ENCODE measurements at regions of chr6 and their contacts with region 1.

Region 1: GRCh38 chr6:137866914-137867684 is at the start of gene TNFAIP3:
- DNase-seq: peak; percentile 97
- H3K4me3 Mint-ChIP-seq: peak within 1 kb of the TSS; percentile 91
- H3K27ac Mint-ChIP-seq: peak within 1 kb of the TSS; percentile 93
- H3K4me1 Mint-ChIP-seq: peaks cover 32% of the 10 kb centered on the region
- H3K27me3 Mint-ChIP-seq: no peaks in the 10 kb centered on the region
- total RNA-seq, gene TNFAIP3: 259 to 267 TPM

Region 2: GRCh38 chr6:137680705-137681346 is 186.3 kb before region 1 on chr6:
- CTCF ChIA-PET with region 1: interaction called, 3 read pairs
- POLR2A ChIA-PET with region 1: interaction called, 11 read pairs
- intact Hi-C with region 1: loop called (anchors 1 kb)
- DNase-seq: no peak
- H3K4me3 Mint-ChIP-seq: peak overlapping the region; percentile 18
- H3K27ac Mint-ChIP-seq: peak overlapping the region; percentile 75
- H3K4me1 Mint-ChIP-seq: peaks cover 64% of the 10 kb centered on the region
- H3K27me3 Mint-ChIP-seq: no peaks in the 10 kb centered on the region

Region 3: DNA sequence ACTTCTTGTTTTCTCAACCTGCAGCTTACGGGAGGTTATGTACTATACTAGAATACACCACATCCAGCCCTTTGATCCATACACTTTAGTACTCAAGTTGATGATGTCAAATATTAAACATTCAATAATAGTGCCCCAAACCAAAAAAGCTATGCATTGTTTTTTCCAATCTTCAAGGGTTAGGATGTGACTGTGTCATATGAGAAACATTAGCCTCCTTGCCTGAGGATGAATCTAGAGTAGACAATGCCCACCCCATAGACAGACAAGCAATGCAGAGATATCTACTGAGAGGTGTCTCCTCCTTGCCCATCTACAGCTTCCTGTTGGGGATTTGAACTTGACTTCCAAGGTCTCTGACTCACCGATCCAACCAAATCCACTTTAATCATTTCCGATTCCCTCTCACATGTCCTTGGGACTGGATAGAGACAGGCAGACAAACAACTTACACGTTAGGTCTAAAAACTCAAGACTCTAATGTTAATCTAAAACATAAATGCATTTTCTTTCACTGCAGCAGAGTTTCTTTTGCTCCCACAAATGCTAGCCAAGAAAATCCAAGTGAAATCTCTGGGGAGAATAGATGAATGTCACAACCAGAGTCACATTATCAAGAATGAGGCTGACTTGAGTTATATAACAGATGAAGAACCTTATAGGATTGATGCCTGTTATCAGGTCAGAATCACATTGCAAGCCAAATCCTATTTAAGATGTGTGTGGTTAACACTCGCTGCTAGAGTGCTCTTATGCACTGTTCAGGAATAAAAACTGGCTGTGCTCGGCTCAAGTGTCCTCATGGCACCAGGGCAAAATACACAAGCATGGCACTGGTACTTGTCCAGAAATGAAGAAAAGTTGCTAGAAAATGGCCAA is 75.6 kb before region 1 on chr6:
- CTCF ChIA-PET with region 1: interaction called, 7 read pairs
- POLR2A ChIA-PET with region 1: interaction called, 11 read pairs
- intact Hi-C with region 1: no loop called
- DNase-seq: no peak
- H3K4me3 Mint-ChIP-seq: peak overlapping the region; percentile 62
- H3K27ac Mint-ChIP-seq: peak overlapping the region; percentile 59
- H3K4me1 Mint-ChIP-seq: peaks cover 53% of the 10 kb centered on the region
- H3K27me3 Mint-ChIP-seq: no peaks in the 10 kb centered on the region

Region 4: DNA sequence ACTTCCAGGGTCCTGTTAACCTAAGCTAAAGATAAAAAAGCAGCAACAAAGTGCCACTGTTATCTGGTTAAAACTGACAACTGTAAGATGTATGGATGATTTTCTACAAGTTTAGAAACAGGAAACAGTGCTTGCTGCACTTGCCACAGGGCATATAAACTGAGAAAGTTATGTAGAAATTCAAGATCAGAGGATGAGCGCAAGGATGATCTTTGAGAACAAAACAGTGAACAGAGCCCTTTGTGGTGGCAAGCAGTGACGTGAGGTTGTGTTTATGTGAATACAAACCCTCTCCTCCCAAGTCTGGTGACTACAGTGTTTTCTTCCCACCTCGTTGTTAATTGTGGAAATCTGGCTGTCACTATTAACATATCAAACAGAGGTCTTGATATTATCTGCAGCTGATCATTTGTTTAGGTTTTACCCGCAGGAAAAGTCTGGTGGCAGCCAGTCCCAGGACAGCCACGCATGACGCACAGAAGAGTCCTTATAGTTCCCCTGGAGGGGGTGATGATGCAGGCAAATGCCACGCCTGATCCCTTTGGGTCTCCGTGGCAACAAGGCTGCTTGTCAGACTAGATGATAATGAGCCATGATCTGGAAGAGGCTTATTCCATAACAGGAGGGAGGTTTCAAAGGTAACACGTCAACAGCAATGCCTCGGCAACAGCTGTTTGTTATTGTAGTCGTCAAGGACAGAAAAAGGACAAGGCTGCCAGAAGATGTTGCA is 43.1 kb before region 1 on chr6:
- CTCF ChIA-PET with region 1: interaction called, 17 read pairs
- POLR2A ChIA-PET with region 1: interaction called, 30 read pairs
- intact Hi-C with region 1: loop called (anchors 1 kb)
- DNase-seq: peak; percentile 83
- H3K4me3 Mint-ChIP-seq: peak overlapping the region; percentile 70
- H3K27ac Mint-ChIP-seq: peak overlapping the region; percentile 96
- H3K4me1 Mint-ChIP-seq: peaks cover 83% of the 10 kb centered on the region
- H3K27me3 Mint-ChIP-seq: no peaks in the 10 kb centered on the region

Region 5: DNA sequence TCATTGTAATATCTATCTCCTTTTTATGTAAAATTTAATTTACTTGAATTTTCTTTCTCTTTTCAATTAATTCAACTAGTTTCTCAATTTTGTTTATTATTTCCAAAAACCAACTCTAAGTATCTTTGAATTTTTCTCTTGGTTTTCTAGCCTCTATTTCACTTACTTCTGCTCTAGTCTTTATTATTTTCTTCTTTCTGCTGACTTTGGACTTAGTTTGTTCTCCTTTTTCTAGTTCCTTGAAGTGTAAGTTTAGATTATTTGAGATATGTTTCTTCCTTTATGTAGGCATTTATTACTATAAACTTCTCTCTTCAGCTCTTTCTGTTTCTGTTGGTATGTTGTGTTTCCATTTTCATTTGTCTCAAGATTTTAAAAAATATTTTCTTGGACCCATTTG is 70.7 kb after region 1 on chr6:
- CTCF ChIA-PET with region 1: interaction called, 270 read pairs
- POLR2A ChIA-PET with region 1: interaction called, 33 read pairs
- intact Hi-C with region 1: loop called (anchors 1 kb)
- DNase-seq: no peak
- H3K4me3 Mint-ChIP-seq: no peak overlapping the region
- H3K27ac Mint-ChIP-seq: no peak overlapping the region
- H3K4me1 Mint-ChIP-seq: peaks cover 38% of the 10 kb centered on the region
- H3K27me3 Mint-ChIP-seq: no peaks in the 10 kb centered on the region

Region 6: GRCh38 chr6:138109042-138109997 is 242.2 kb after region 1 on chr6:
- CTCF ChIA-PET with region 1: no interaction called
- POLR2A ChIA-PET with region 1: no interaction called
- intact Hi-C with region 1: loop called (anchors 2 kb)
- DNase-seq: peak; percentile 89
- H3K4me3 Mint-ChIP-seq: no peak overlapping the region
- H3K27ac Mint-ChIP-seq: no peak overlapping the region
- H3K4me1 Mint-ChIP-seq: peaks cover 21% of the 10 kb centered on the region
- H3K27me3 Mint-ChIP-seq: peaks cover 12% of the 10 kb centered on the region